Caco-2 (cell line): ENCODE measurements at regions of chr5 and their contacts with region 1.

Region 1: DNA sequence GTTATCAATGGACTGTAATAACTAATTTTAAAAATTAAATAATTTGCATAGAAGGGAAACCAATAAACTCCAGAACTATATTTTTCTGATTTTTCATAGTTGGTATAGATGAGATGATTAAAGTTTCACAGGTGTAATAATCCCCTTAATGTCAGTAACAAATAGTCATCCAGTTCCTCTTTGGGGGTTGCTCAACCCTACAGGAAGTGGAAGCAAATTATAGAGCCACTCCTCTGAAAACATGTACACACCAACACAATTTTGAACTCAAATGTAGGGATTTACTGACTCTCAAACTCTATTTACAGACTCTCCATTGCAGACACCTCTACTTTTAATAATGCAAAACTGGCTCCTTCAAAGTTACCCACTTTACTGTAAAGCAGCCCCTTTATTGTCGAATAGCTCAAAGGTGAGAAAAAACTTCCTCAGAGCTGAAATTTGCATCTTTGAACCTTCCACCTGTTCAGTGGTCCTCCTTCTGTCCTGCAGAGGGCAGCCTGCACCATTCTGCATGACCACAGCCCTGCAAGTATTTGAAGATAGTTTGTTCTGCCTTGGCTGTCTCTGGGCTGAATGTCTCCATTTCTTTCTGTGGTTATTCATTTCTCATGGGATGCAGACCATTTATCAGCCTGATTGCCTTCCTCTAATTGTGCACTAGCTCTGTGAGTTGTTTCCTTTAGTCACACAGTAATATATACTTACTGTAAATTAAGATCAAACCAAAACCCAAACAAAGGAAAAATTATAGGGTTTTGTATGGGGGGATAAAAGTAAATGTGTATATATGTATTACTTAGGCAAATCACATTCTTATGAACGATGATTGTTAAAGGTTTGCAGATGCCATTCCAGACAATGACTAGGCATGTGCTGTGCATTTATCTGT is 383.2 kb upstream of the SGCD start:
- DNase-seq: peak; percentile 73 to 77
- H3K4me3 ChIP-seq: no peak overlapping the region
- H3K4me3 Mint-ChIP-seq: peak overlapping the region; percentile 38
- H3K27ac Mint-ChIP-seq: peak overlapping the region; percentile 63
- H3K4me1 ChIP-seq: peaks cover 50% of the 10 kb centered on the region; the same call in 1 of the 2 replicates
- H3K4me1 Mint-ChIP-seq: peaks cover 31% of the 10 kb centered on the region
- H3K27me3 ChIP-seq: no peaks in the 10 kb centered on the region
- H3K27me3 Mint-ChIP-seq: no peaks in the 10 kb centered on the region
- CTCF ChIP-seq: peak; percentile 86 to 93

Region 2: GRCh38 chr5:155926031-155926430 is 17.7 kb before region 1 on chr5:
- CTCF ChIA-PET with region 1: no interaction called
- POLR2A ChIA-PET with region 1: no interaction called
- intact Hi-C with region 1: no loop called
- DNase-seq: no peak
- H3K4me3 ChIP-seq: no peak overlapping the region
- H3K4me3 Mint-ChIP-seq: no peak overlapping the region
- H3K27ac Mint-ChIP-seq: no peak overlapping the region
- H3K4me1 ChIP-seq: no peaks in the 10 kb centered on the region
- H3K4me1 Mint-ChIP-seq: peaks cover 6% of the 10 kb centered on the region
- H3K27me3 ChIP-seq: no peaks in the 10 kb centered on the region
- H3K27me3 Mint-ChIP-seq: peaks cover 10% of the 10 kb centered on the region
- CTCF ChIP-seq: no peak

Region 3: DNA sequence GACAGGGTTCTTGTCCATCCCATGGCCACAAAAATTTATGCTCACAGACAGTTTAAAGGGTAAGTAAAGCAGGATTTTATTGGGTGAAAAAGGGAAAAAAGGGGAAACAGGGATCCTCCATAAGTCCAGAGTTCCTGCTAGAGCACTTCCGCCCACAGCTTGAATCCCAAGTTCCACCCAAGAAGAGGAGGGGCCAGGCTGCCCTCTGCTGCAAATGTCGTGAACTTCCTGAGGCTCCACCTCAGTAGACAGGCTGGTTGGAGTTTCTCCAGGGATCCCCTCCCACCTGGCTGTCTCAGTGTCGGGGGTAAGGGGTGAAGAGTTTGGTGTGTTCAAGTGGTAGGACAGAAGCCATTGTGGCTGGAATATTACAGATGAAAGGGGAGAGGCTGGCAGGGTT is 108.2 kb after region 1 on chr5:
- CTCF ChIA-PET with region 1: interaction called, 4 read pairs
- POLR2A ChIA-PET with region 1: no interaction called
- intact Hi-C with region 1: loop called (anchors 1 kb)
- DNase-seq: peak; percentile 34 to 50
- H3K4me3 ChIP-seq: no peak overlapping the region
- H3K4me3 Mint-ChIP-seq: no peak overlapping the region
- H3K27ac Mint-ChIP-seq: no peak overlapping the region
- H3K4me1 ChIP-seq: no peaks in the 10 kb centered on the region
- H3K4me1 Mint-ChIP-seq: peaks cover 13% of the 10 kb centered on the region
- H3K27me3 ChIP-seq: no peaks in the 10 kb centered on the region
- H3K27me3 Mint-ChIP-seq: no peaks in the 10 kb centered on the region
- CTCF ChIP-seq: no peak

Region 4: GRCh38 chr5:156383510-156384265 is 439.9 kb after region 1 on chr5:
- CTCF ChIA-PET with region 1: no interaction called
- POLR2A ChIA-PET with region 1: no interaction called
- intact Hi-C with region 1: loop called (anchors 10 kb)
- DNase-seq: no peak
- H3K4me3 ChIP-seq: no peak overlapping the region
- H3K4me3 Mint-ChIP-seq: no peak overlapping the region
- H3K27ac Mint-ChIP-seq: no peak overlapping the region
- H3K4me1 ChIP-seq: no peaks in the 10 kb centered on the region
- H3K4me1 Mint-ChIP-seq: no peaks in the 10 kb centered on the region
- H3K27me3 ChIP-seq: no peaks in the 10 kb centered on the region
- H3K27me3 Mint-ChIP-seq: no peaks in the 10 kb centered on the region
- CTCF ChIP-seq: no peak

Region 5: GRCh38 chr5:156693113-156693512 is 749.4 kb after region 1 on chr5:
- CTCF ChIA-PET with region 1: no interaction called
- POLR2A ChIA-PET with region 1: no interaction called
- intact Hi-C with region 1: loop called (anchors 5 kb)
- DNase-seq: peak; percentile 43 to 44
- H3K4me3 ChIP-seq: no peak overlapping the region
- H3K4me3 Mint-ChIP-seq: peak overlapping the region; percentile 64
- H3K27ac Mint-ChIP-seq: peak overlapping the region; percentile 71
- H3K4me1 ChIP-seq: peaks cover 22% of the 10 kb centered on the region
- H3K4me1 Mint-ChIP-seq: peaks cover 16% of the 10 kb centered on the region
- H3K27me3 ChIP-seq: no peaks in the 10 kb centered on the region; the same call in 1 of the 2 replicates
- H3K27me3 Mint-ChIP-seq: no peaks in the 10 kb centered on the region
- CTCF ChIP-seq: peak in 1 of 2 experiments; percentile 2

Region 6: GRCh38 chr5:156815988-156816599 is 872.3 kb after region 1 on chr5:
- CTCF ChIA-PET with region 1: interaction called, 3 read pairs
- POLR2A ChIA-PET with region 1: no interaction called
- intact Hi-C with region 1: loop called (anchors 2 kb)
- DNase-seq: peak; percentile 46 to 47
- H3K4me3 ChIP-seq: no peak overlapping the region
- H3K4me3 Mint-ChIP-seq: no peak overlapping the region
- H3K27ac Mint-ChIP-seq: no peak overlapping the region
- H3K4me1 ChIP-seq: 0 out of 2 replicates have a peak, but pooled peaks cover 6% of the 10 kb centered on the region
- H3K4me1 Mint-ChIP-seq: peaks cover 11% of the 10 kb centered on the region
- H3K27me3 ChIP-seq: no peaks in the 10 kb centered on the region
- H3K27me3 Mint-ChIP-seq: no peaks in the 10 kb centered on the region
- CTCF ChIP-seq: peak; percentile 58 to 60

Region 7: GRCh38 chr5:157038568-157039187 is 1094.9 kb after region 1 on chr5:
- CTCF ChIA-PET with region 1: no interaction called
- POLR2A ChIA-PET with region 1: no interaction called
- intact Hi-C with region 1: loop called (anchors 10 kb)
- DNase-seq: no peak
- H3K4me3 ChIP-seq: no peak overlapping the region
- H3K4me3 Mint-ChIP-seq: no peak overlapping the region
- H3K27ac Mint-ChIP-seq: peak overlapping the region; percentile 88
- H3K4me1 ChIP-seq: peaks cover 39% of the 10 kb centered on the region
- H3K4me1 Mint-ChIP-seq: peaks cover 24% of the 10 kb centered on the region
- H3K27me3 ChIP-seq: no peaks in the 10 kb centered on the region
- H3K27me3 Mint-ChIP-seq: no peaks in the 10 kb centered on the region
- CTCF ChIP-seq: no peak